Activated CD4-positive, alpha-beta memory T cell treated with anti-CD3 and anti-CD28 coated beads, Interleukin-2, amount 10 ng/mL, durations not matched to agents 7 days and 5 days (primary cell): ENCODE measurements at regions of chr10 and their contacts with region 1.

Region 1: DNA sequence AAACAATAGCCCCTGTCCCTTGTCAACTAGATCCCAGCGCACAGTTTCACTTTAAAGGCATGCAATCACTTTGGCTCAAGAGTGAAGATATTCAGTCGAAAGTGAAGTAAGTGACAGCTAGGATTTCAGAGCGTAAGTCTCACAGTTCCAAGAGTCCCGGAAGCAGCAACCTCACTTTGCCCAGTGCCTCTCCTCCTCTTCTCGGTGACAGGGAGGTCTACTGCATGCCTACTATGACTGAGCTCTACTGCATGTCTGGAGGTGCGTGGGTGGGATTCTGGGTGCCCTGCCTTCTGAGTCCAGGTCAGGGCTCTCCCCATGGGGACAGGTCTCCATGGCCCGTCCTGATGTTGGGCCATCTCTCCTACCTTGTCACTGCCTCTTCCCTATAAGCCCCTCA is 17.0 kb downstream of the PRKCQ start:
- DNase-seq: peak; percentile 70
- H3K4me3 Mint-ChIP-seq: peak overlapping the region; percentile 71
- H3K27ac Mint-ChIP-seq: peak overlapping the region; percentile 92
- H3K4me1 Mint-ChIP-seq: peaks cover 90% of the 10 kb centered on the region
- H3K27me3 Mint-ChIP-seq: no peaks in the 10 kb centered on the region

Region 2: GRCh38 chr10:6498771-6499170 is 64.3 kb before region 1 on chr10:
- CTCF ChIA-PET with region 1: no interaction called
- POLR2A ChIA-PET with region 1: interaction called, 18 read pairs
- DNase-seq: peak; percentile 58
- H3K4me3 Mint-ChIP-seq: peak overlapping the region; percentile 55
- H3K27ac Mint-ChIP-seq: peak overlapping the region; percentile 91
- H3K4me1 Mint-ChIP-seq: peaks cover 32% of the 10 kb centered on the region
- H3K27me3 Mint-ChIP-seq: no peaks in the 10 kb centered on the region

Region 3: DNA sequence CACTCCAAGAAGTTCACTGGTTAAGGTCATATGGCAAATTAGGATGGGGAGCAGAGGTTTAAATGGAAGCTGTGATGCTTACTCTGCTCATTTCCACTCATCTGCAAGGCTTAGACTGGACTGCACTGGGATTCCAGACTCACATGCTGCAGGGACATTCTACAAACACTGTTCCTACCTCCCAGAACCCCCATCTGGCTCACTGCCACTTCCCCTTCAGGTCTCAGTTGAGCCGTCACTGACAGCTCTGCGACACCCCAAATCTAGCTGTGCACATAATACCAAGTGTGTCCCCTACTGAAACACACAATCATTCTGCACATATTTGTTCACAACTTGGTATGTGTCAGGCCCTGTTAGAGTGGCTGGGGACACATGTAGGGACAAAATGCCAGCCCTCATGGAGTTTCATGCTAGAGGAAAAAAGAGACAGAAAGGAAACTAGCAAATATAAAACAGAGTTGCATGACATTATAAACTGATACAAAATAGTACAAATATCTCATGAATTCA is 11.6 kb after region 1 on chr10:
- CTCF ChIA-PET with region 1: interaction called, 15 read pairs
- POLR2A ChIA-PET with region 1: interaction called, 75 read pairs
- DNase-seq: no peak
- H3K4me3 Mint-ChIP-seq: no peak overlapping the region
- H3K27ac Mint-ChIP-seq: no peak overlapping the region
- H3K4me1 Mint-ChIP-seq: peaks cover 72% of the 10 kb centered on the region
- H3K27me3 Mint-ChIP-seq: no peaks in the 10 kb centered on the region